CD8-positive, alpha-beta memory T cell (primary cell): ENCODE measurements at regions of chr19 and their contacts with region 1.

Region 1: GRCh38 chr19:39934584-39935363 is at the start of gene FCGBP:
- DNase-seq: no peak
- H3K4me3 ChIP-seq: no peak within 1 kb of the TSS
- H3K4me3 Mint-ChIP-seq: peak within 1 kb of the TSS in 4 of 7 donors; percentile 17 to 61 (median 34)
- H3K27ac ChIP-seq: no peak within 1 kb of the TSS
- H3K27ac Mint-ChIP-seq: peak within 1 kb of the TSS; percentile 30 to 87 (median 80)
- H3K4me1 ChIP-seq: peaks cover 40% of the 10 kb centered on the region
- H3K4me1 Mint-ChIP-seq: peaks cover 47 to 67% (median 60%) of the 10 kb centered on the region in 3 donors
- H3K27me3 ChIP-seq: no peaks in the 10 kb centered on the region
- H3K27me3 Mint-ChIP-seq: no peaks in the 10 kb centered on the region
- total RNA-seq, gene FCGBP: 7.0 to 7.9 TPM

Region 2: GRCh38 chr19:39916851-39917396 is 17.9 kb before region 1 on chr19:
- CTCF ChIA-PET with region 1: no interaction called
- POLR2A ChIA-PET with region 1: no interaction called
- DNase-seq: no peak
- H3K4me3 ChIP-seq: no peak overlapping the region
- H3K4me3 Mint-ChIP-seq: no peak overlapping the region
- H3K27ac ChIP-seq: no peak overlapping the region
- H3K27ac Mint-ChIP-seq: no peak overlapping the region
- H3K4me1 ChIP-seq: no peaks in the 10 kb centered on the region
- H3K4me1 Mint-ChIP-seq: peaks cover 7 to 10% (median 7%) of the 10 kb centered on the region in 3 donors
- H3K27me3 ChIP-seq: no peaks in the 10 kb centered on the region
- H3K27me3 Mint-ChIP-seq: no peaks in the 10 kb centered on the region

Region 3: DNA sequence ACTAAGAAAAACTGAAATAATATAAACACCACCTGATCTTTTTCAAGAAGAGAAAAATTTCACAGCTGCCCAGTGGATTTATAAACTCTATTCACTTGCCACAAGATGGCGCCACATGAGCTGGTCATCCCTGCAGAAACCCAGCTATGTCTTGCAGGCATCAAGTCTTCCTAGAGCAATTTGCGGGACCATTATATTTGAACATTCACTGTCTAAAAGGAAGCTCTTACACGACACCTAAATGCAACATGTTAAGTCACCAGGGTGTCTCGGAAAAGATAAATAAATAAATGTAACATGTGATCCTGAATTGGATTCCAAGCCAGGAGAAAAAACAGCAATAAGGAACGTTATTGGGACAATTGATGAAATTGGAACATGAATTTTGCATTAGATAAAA is 370.6 kb after region 1 on chr19:
- CTCF ChIA-PET with region 1: no interaction called
- POLR2A ChIA-PET with region 1: no interaction called
- DNase-seq: peak; percentile 54 to 78 (median 61)
- H3K4me3 ChIP-seq: no peak overlapping the region
- H3K4me3 Mint-ChIP-seq: no peak overlapping the region
- H3K27ac ChIP-seq: no peak overlapping the region
- H3K27ac Mint-ChIP-seq: no peak overlapping the region
- H3K4me1 ChIP-seq: peaks cover 3% of the 10 kb centered on the region
- H3K4me1 Mint-ChIP-seq: peaks cover 3 to 8% (median 5%) of the 10 kb centered on the region in 3 donors
- H3K27me3 ChIP-seq: no peaks in the 10 kb centered on the region
- H3K27me3 Mint-ChIP-seq: no peaks in the 10 kb centered on the region

Region 4: DNA sequence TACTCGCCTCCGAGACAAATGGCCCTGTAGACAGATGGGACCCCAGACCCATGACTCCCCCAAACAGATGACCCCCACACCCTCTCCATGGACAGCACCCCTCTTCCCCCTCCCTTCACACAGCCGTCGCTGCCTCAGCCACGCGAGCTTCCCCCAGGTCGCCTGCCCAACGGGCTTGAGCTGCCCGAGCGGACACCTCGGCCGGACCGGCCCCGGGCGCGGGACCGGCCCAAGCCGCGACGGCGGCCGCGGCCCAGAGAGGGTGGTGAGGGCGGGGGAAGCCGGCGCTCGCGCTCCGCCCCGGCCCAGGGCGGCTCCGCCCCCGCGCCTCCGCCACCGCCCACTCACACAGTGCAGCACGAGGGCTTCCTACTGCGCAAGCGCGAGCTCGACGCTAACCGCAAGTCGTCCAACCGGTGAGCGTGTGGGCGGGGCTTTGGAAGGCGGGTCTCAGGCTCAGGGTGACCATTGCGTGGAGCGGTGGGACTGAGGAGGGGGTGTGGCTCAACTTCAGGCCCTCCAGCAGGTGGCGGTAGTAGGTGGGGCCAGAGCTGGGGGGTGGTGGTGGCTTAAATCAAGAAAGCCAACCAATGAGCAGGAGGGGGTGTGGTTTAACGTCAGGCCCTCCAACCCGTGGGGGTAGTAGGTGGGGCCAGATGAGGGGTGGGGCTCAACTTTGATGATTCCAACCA is 635.7 kb after region 1 on chr19:
- CTCF ChIA-PET with region 1: no interaction called
- POLR2A ChIA-PET with region 1: interaction called, 18 read pairs
- DNase-seq: peak; percentile 92 to 97 (median 96)
- H3K4me3 ChIP-seq: peak overlapping the region; percentile 59
- H3K4me3 Mint-ChIP-seq: peak overlapping the region; percentile 74 to 83 (median 78)
- H3K27ac ChIP-seq: peak overlapping the region; percentile 12
- H3K27ac Mint-ChIP-seq: peak overlapping the region; percentile 61 to 93 (median 86)
- H3K4me1 ChIP-seq: peaks cover 14% of the 10 kb centered on the region
- H3K4me1 Mint-ChIP-seq: peaks cover 13 to 24% (median 22%) of the 10 kb centered on the region in 3 donors
- H3K27me3 ChIP-seq: peaks cover 14% of the 10 kb centered on the region
- H3K27me3 Mint-ChIP-seq: peaks cover 17 to 22% of the 10 kb centered on the region in 2 donors